ENCODE measurements at regions of chr4 and their contacts with region 1.

Region 1: DNA sequence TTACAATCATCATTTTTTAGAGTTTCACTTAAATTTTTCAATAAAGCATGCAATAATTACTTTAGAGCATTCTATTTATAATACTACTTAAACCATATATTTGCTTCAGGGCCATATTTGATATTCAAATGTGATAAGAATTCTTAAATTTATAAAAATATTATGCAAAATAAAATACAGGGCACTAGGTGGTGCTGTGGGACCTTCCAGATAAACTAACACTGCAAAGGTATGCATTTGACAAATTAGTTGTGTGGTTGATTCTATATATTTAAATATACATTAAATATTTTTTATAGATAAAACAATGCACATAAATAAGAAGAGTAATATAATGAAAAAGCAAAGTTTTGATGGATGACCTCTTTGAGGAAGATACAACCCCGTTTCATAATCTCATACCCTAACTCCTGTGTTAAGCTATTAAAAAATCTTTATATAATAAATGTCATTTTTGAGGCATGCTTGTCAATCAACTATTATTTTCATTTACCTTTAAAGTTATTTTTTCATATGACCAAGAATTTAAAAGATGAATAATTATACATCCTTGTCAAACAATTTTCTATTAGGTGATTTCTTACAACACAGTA is 128.4 kb downstream of the REELD1 start:
- DNase-seq: peak; percentile 70
- H3K4me3 ChIP-seq: no peak overlapping the region
- H3K27ac ChIP-seq: no peak overlapping the region
- H3K4me1 ChIP-seq: peaks cover 5% of the 10 kb centered on the region
- H3K27me3 ChIP-seq: no peaks in the 10 kb centered on the region
- CTCF ChIP-seq: peak in 1 of 2 donors; percentile 19
- POLR2A ChIP-seq: no peak

Region 2: DNA sequence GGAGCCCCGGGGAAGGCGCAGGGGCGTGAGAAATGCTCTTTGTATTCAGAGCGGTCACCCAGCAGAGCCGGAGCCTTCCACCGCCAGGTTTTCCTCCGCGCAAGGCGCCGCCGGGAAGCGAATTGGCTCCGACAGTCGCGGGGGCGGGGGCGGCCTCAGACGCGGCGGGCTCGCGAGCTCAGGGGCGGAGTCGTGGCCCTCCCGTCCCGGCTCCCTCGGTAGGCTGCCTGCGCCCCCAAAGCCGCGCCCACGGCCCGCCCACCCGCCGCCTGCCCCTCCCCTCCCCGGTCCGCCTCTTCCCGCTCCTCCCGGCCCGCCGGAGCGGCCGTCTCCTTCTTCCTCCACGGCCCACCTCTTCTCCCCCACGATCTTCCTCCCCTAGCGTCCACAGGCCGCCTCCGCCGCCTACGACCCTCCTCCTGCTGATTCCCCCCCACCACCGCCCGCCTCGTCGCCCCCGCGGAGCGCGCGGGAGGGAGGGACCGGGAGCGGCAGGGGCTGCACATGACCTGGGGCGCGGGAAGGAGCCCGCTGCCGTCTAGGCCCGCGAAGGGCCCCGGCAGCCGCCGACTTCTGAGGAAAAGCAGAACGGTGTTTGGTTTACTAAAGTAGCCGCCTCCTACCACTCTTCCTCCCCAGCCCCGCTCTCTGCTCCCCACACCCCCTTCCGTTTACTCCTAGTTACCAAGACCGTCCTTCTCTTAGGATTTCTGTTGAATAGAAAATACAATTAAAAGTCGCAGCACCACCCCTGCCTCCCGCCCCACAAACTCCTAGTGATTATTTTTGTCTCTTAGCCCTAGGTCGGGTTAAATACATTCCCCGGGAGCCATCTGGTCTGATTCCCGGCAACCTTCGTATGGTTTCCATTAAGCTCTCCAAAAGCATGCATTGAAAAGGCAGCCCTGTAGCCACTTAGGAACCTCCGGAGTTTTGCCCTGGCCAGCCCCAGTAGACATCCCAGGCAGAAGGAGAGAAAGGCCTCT is 609.5 kb before region 1 on chr4:
- CTCF ChIA-PET with region 1: no interaction called
- POLR2A ChIA-PET with region 1: no interaction called
- dilution Hi-C with region 1: no loop called
- intact Hi-C with region 1: loop called (anchors 5 kb)
- DNase-seq: peak; percentile 97
- H3K4me3 ChIP-seq: peak overlapping the region; percentile 38 to 69 (median 51)
- H3K27ac ChIP-seq: peak overlapping the region; percentile 94
- H3K4me1 ChIP-seq: peaks cover 42% of the 10 kb centered on the region
- H3K27me3 ChIP-seq: no peaks in the 10 kb centered on the region
- CTCF ChIP-seq: no peak
- POLR2A ChIP-seq: peak; percentile 73

Region 3: DNA sequence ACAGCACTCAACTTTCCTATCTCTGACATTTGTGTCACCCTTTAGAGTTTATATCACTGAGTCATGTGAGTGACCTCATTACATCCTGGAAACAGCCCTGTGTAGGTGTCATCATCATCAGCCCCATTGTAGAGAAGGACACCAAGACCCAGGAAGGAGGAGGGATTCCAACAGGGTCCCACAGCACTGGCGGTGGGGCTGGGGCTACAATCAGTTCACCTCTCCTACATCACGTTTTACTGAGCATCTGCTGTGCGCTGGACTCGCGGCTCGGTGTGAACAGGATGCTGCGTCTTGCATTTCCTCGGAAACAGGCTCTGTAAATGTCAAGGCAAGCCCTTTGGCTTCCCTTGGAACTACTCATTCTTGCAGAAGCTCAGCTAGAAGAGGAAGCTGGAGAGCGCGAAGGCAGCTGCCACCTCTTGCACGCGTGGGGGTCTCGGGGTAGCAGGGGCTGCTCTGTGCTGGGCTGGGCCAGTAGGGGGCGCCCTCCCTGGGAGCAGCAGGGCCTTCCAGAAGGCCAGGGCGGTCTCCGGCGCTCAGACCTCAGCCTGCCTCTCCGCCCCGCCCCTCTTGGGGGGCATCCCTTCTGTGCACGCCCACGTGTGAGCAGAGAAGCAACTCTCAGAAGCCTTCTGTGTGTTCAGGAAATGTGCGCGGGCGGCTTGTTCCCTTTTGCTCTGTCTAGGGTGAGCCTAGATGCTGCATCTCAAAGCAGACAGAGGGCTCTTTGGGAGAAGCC is 99.4 kb before region 1 on chr4:
- CTCF ChIA-PET with region 1: interaction called, 4 read pairs
- POLR2A ChIA-PET with region 1: no interaction called
- dilution Hi-C with region 1: no loop called
- intact Hi-C with region 1: loop called (anchors 1 kb)
- DNase-seq: peak; percentile 37
- H3K4me3 ChIP-seq: no peak overlapping the region
- H3K27ac ChIP-seq: peak overlapping the region; percentile 97
- H3K4me1 ChIP-seq: peaks cover 23% of the 10 kb centered on the region
- H3K27me3 ChIP-seq: no peaks in the 10 kb centered on the region
- CTCF ChIP-seq: peak; percentile 44 to 53
- POLR2A ChIP-seq: no peak

Region 4: DNA sequence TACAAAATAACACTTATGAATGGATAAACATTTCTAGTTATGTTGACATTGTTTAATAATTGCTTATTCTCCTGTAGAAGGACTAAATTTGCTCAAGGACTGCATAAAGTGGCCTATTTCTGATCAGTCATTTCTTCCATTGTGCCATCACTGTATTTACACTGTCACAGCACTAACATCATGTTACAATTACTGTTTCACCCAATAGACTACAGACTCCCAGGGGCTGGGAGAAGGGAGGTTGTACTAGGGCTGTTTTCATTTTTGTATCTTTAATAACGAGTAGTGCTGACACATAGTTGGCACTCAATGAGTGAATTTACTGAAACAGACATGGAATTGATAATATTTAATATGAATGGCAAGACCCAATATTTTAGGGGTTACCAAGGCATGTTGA is 39.5 kb after region 1 on chr4:
- CTCF ChIA-PET with region 1: no interaction called
- POLR2A ChIA-PET with region 1: no interaction called
- dilution Hi-C with region 1: no loop called
- intact Hi-C with region 1: no loop called
- DNase-seq: no peak
- H3K4me3 ChIP-seq: no peak overlapping the region
- H3K27ac ChIP-seq: no peak overlapping the region
- H3K4me1 ChIP-seq: no peaks in the 10 kb centered on the region
- H3K27me3 ChIP-seq: no peaks in the 10 kb centered on the region
- CTCF ChIP-seq: no peak
- POLR2A ChIP-seq: no peak

Region 5: GRCh38 chr4:146428298-146428697 is 85.6 kb after region 1 on chr4:
- CTCF ChIA-PET with region 1: no interaction called
- POLR2A ChIA-PET with region 1: no interaction called
- dilution Hi-C with region 1: no loop called
- intact Hi-C with region 1: no loop called
- DNase-seq: no peak
- H3K4me3 ChIP-seq: no peak overlapping the region
- H3K27ac ChIP-seq: no peak overlapping the region
- H3K4me1 ChIP-seq: no peaks in the 10 kb centered on the region
- H3K27me3 ChIP-seq: no peaks in the 10 kb centered on the region
- CTCF ChIP-seq: no peak
- POLR2A ChIP-seq: no peak

Region 6: GRCh38 chr4:146472404-146472803 is 129.7 kb after region 1 on chr4:
- CTCF ChIA-PET with region 1: interaction called, 10 read pairs
- POLR2A ChIA-PET with region 1: no interaction called
- dilution Hi-C with region 1: no loop called
- intact Hi-C with region 1: no loop called
- DNase-seq: no peak
- H3K4me3 ChIP-seq: no peak overlapping the region
- H3K27ac ChIP-seq: no peak overlapping the region
- H3K4me1 ChIP-seq: peaks cover 18% of the 10 kb centered on the region
- H3K27me3 ChIP-seq: no peaks in the 10 kb centered on the region
- CTCF ChIP-seq: no peak
- POLR2A ChIP-seq: no peak

Region 7: DNA sequence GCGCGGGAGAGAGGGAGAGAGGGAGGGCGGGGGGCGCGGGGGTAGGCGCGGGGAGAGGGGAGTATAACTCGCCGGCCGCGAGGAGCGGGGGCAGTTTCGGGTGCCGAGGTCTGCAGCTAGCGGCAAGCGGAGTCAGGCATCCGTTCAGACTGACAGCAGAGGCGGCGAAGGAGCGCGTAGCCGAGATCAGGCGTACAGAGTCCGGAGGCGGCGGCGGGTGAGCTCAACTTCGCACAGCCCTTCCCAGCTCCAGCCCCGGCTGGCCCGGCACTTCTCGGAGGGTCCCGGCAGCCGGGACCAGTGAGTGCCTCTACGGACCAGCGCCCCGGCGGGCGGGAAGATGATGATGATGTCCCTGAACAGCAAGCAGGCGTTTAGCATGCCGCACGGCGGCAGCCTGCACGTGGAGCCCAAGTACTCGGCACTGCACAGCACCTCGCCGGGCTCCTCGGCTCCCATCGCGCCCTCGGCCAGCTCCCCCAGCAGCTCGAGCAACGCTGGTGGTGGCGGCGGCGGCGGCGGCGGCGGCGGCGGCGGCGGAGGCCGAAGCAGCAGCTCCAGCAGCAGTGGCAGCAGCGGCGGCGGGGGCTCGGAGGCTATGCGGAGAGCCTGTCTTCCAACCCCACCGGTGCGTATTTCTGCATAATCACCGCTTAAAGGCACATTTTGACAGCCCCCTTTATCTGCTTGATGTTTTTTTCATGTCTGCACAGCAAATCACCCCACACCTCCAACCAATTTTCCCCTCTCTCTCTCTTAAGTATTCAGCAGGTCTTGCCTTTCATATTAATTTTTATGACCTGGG is 296.3 kb after region 1 on chr4 and contains the start of gene POU4F2:
- CTCF ChIA-PET with region 1: interaction called, 10 read pairs
- POLR2A ChIA-PET with region 1: no interaction called
- dilution Hi-C with region 1: no loop called
- intact Hi-C with region 1: loop called (anchors 5 kb)
- DNase-seq: peak; percentile 23
- H3K4me3 ChIP-seq: peak within 1 kb of the TSS in 1 of 3 experiments; percentile 19
- H3K27ac ChIP-seq: no peak within 1 kb of the TSS
- H3K4me1 ChIP-seq: peaks cover 3% of the 10 kb centered on the region
- H3K27me3 ChIP-seq: peaks cover 68 to 90% of the 10 kb centered on the region in 2 experiments
- CTCF ChIP-seq: no peak
- POLR2A ChIP-seq: no peak
- total RNA-seq, gene POU4F2: not detected in 2 replicates

Region 8: DNA sequence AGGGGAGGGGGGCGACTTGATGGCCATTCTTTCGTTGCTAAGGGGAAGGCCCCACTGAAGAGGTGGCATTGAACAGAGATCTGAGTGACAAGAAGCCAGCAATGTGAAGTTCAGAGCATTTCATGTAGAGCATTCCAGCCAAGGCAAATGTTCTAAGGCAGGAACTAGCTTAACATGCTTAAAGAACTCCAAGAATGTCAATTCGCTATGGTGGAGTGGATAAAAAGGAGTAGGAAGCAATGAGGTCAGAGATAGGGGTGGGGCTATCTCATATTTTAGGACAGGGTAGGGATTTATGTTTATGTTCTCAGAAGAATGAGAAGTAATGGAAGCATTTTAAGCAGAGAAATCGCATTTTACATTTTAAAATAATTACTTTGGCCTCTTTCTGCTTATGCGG is 472.1 kb after region 1 on chr4:
- CTCF ChIA-PET with region 1: no interaction called
- POLR2A ChIA-PET with region 1: no interaction called
- dilution Hi-C with region 1: no loop called
- intact Hi-C with region 1: no loop called
- DNase-seq: no peak
- H3K4me3 ChIP-seq: no peak overlapping the region
- H3K27ac ChIP-seq: no peak overlapping the region
- H3K4me1 ChIP-seq: no peaks in the 10 kb centered on the region
- H3K27me3 ChIP-seq: no peaks in the 10 kb centered on the region
- CTCF ChIP-seq: no peak
- POLR2A ChIP-seq: no peak

Region 9: DNA sequence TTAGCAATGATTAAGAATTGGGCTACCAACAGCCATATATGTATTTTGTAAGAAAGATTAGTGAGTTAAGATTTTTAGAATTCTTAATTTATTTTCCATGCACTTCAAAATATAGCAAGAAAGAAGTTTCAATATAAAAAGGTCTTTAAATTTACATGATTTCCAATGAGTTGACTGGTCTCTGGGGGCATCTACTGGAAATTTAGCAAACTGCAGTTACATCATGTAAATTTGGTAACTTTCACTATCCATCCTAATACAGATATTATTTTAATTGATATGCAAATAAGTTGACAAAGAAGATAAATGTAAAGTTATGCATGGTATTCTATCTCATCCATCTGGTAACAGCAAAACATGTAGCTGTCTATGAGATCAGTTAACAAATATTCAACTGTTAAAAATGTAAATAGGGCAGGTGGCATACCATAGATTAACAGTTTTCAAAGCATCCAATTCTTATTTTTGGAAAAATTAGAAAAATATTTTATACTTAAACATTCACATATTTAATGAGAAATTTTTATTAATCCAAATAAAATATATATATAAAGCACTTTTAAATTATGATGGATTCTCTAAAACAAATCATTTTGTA is 573.9 kb after region 1 on chr4:
- CTCF ChIA-PET with region 1: interaction called, 56 read pairs
- POLR2A ChIA-PET with region 1: no interaction called
- dilution Hi-C with region 1: no loop called
- intact Hi-C with region 1: loop called (anchors 1 kb)
- DNase-seq: peak; percentile 72
- H3K4me3 ChIP-seq: no peak overlapping the region
- H3K27ac ChIP-seq: no peak overlapping the region
- H3K4me1 ChIP-seq: no peaks in the 10 kb centered on the region
- H3K27me3 ChIP-seq: peaks cover 0 to 19% of the 10 kb centered on the region in 2 experiments
- CTCF ChIP-seq: peak; percentile 39 to 49
- POLR2A ChIP-seq: no peak

Measured in endothelial cell of umbilical vein (primary cell).